Activated naive CD8-positive, alpha-beta T cell treated with anti-CD3 and anti-CD28 coated beads, Interleukin-2, amount 10 ng/mL, durations not matched to agents 7 days and 5 days (primary cell): ENCODE measurements at regions of chr6 and their contacts with region 1.

Region 1: DNA sequence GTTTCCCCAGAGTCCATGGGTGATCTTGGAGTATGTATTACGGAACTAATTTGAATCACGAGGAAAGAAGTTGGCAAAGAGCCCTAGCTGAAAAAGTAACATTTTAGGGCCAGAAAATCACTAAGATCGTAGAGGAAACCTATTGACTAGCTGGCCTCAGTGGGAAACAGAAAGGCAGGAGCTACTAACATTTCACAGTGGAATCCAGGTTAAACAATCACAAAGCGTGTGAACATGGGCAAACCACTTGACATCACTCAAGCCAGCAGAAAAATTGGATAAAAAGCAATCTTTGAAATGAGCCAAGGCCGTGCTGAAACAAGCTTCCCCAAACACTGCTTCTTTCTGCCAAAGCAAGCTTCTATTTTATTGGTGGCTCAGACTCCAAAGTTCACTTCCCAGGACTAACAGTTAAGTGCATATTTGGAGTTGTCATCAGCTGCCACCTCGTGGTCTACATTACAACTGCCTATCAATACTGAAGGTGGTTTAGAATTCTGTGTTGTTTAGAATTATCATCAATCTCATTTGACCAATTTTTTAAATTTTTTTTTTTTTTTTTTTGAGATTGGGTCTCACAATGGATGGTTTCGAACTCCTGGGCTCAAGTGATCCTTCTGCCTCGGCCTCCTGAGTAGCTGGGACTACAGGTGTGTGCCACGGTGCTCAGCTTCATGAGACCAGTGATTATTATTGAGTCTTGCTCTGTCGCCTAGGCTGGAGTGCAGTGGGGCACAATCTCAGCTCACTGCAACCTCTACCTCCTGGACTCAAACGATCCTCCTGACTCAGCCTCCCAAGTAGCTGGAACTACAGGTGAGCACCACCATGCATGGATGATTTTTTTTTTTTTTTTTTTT is 10.6 kb downstream of the RPS10 start:
- DNase-seq: no peak
- ATAC-seq: peak; percentile 75
- H3K4me3 Mint-ChIP-seq: no peak overlapping the region
- H3K27ac Mint-ChIP-seq: peak overlapping the region; percentile 38
- H3K4me1 Mint-ChIP-seq: peaks cover 6% of the 10 kb centered on the region
- H3K27me3 Mint-ChIP-seq: no peaks in the 10 kb centered on the region

Region 2: DNA sequence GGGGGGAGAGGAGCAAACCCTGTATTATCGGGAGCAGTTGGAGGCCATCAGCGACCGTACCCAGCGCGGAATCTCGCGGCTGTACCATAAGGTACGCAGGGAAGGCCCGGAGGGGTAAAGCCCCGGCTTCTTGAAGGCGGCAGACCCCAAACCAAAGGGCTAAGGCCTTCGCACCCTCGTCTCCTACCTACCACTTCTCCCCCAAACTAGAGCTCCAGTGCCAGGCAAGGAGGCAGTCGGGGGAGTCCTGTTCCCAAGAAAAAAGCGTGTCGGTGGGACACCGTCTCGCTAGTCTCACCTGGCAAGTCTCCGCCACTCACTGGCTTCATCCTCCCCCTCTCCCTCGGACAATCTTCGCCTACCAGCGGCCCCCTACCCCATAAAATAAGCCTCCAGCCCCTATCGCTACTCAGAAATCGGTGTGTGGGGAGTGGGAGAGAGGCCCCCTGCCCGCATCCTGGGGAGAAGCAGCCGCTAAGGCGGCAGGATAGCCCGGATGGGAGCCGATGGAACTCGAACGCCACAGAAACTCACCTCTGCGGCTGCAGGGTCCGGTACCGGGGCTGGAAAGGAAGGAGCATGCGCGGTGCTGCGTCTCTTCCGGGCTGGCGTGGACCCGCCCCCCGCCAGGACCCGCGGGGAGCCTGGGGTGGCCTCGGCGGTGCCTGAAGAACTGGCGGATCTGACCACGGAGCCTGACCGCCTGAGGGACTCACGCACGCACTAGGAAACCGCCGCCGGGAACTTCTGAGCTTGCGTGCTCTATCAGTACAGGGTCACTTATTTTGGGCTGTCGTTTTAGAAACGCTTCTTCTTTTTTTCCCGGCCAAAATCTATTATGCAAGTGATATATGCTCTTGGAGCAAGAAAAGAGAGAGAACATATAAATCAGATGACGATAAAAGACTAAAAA is 10.5 kb after region 1 on chr6 and contains the start of gene RPS10:
- POLR2A ChIA-PET with region 1: interaction called, 10 read pairs
- DNase-seq: peak; percentile 96
- ATAC-seq: peak; percentile 95
- H3K4me3 Mint-ChIP-seq: peak within 1 kb of the TSS; percentile 97
- H3K27ac Mint-ChIP-seq: peak within 1 kb of the TSS; percentile 99
- H3K4me1 Mint-ChIP-seq: peaks cover 26% of the 10 kb centered on the region
- H3K27me3 Mint-ChIP-seq: peaks cover 6% of the 10 kb centered on the region
- total RNA-seq, gene RPS10: 1,507 to 1,529 TPM

Region 3: GRCh38 chr6:34476447-34476846 is 61.2 kb after region 1 on chr6:
- POLR2A ChIA-PET with region 1: no interaction called
- DNase-seq: no peak
- ATAC-seq: no peak
- H3K4me3 Mint-ChIP-seq: no peak overlapping the region
- H3K27ac Mint-ChIP-seq: no peak overlapping the region
- H3K4me1 Mint-ChIP-seq: peaks cover 2% of the 10 kb centered on the region
- H3K27me3 Mint-ChIP-seq: peaks cover 8% of the 10 kb centered on the region